ENCODE measurements at regions of chr9 and their contacts with region 1.

Region 1: DNA sequence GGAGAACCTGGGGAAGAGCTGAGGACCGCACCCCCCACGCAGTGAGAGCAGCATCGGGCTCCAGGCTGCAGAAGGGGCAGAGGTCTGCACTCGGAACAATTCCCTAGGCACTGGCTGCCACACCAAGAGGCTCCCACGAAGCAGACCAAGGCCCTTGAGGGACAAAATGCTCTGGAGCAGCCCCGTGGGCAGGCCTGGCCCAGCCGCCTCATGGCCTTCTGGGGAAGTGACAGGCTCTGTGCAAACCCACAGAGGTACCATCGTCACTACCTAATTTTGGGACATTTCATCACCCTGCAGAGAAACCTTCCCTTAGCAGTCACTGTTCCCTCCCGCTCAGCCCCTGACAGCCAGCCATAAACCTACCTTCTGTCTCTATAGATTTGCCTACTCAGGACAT is 15.9 kb downstream of the FBXW5 start:
- DNase-seq: peak; percentile 68 to 92
- ATAC-seq: peak; percentile 91 to 94 (median 92)
- H3K4me3 ChIP-seq: peak overlapping the region; percentile 55
- H3K27ac ChIP-seq: peak overlapping the region; percentile 98
- H3K4me1 ChIP-seq: peaks cover 63% of the 10 kb centered on the region
- H3K27me3 ChIP-seq: no peaks in the 10 kb centered on the region
- CTCF ChIP-seq: peak; percentile 52

Region 2: DNA sequence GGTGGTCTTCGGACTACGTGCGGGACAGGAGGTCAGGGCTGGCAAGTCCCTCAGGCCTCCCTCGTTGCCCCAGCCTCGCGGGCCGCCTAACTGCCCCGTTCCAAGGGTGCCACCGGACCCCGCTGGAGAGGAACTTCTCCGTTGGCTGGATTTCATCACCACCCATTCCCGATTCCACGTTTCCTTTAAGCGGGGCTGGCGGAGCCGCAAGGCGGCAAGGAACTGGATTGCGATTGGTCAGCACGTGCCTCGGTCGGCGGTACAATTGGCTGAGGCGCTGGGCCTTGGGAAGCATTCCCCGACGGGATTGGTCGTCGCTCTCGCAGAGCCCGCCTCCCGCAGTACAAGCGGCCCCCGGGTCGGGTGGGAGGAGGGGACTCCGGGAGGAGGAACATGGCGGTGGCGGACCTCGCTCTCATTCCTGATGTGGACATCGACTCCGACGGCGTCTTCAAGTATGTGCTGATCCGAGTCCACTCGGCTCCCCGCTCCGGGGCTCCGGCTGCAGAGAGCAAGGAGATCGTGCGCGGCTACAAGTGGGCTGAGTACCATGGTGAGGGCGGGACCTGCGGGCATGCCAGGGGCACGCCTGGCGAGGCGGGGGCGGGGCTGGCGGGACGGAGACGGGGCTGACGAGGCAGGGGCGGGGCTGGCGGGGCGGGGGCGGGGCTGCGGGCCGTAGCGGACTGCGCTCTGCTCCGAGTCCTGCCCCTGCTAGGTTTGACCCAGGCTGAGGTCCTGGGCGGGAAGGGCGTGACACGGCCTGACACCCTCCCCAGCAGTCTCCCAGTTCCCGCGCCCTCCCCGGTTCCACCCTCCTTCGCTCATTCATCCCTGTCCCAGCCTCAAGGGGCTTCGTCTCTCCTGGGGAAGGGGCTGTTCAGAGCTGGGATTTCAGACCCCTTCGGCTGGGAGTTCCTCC is 79.3 kb before region 1 on chr9 and contains the start of gene PHPT1:
- intact Hi-C with region 1: loop called (anchors 5 kb)
- DNase-seq: peak; percentile 99
- ATAC-seq: peak; percentile 85 to 91 (median 88)
- H3K4me3 ChIP-seq: peak within 1 kb of the TSS; percentile 81
- H3K27ac ChIP-seq: peak within 1 kb of the TSS; percentile 91
- H3K4me1 ChIP-seq: peaks cover 26% of the 10 kb centered on the region
- H3K27me3 ChIP-seq: peaks cover 0 to 20% (median 8%) of the 10 kb centered on the region in 3 donors
- CTCF ChIP-seq: no peak
- total RNA-seq, gene PHPT1: 154 to 272 (median 220) TPM

Region 3: DNA sequence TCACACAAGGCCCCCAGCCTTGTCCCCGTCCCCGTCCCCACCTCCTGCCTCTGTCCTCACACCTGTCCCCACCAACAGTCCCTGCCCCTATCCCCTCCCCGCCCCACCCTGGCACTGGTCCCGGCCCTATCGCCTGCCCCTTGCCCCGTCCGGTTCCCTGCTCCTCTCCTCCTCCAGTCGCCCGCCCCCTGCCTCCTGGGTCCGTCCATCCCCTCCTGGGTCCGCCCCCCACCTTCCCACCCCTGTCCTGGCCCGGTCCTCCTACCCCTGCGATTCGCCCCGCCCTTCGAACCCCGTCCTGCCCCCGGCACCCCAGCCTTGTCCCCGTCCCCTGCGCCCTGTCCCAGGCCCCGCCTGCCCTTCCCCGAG is 62.9 kb before region 1 on chr9:
- intact Hi-C with region 1: loop called in 1 of 2 experiments (anchors 5 kb)
- DNase-seq: peak; percentile 44 to 71
- ATAC-seq: peak in 2 of 4 donors; percentile 37 to 46
- H3K4me3 ChIP-seq: peak overlapping the region; percentile 89
- H3K27ac ChIP-seq: peak overlapping the region; percentile 96
- H3K4me1 ChIP-seq: peaks cover 21% of the 10 kb centered on the region
- H3K27me3 ChIP-seq: no peaks in the 10 kb centered on the region
- CTCF ChIP-seq: no peak

Region 4: DNA sequence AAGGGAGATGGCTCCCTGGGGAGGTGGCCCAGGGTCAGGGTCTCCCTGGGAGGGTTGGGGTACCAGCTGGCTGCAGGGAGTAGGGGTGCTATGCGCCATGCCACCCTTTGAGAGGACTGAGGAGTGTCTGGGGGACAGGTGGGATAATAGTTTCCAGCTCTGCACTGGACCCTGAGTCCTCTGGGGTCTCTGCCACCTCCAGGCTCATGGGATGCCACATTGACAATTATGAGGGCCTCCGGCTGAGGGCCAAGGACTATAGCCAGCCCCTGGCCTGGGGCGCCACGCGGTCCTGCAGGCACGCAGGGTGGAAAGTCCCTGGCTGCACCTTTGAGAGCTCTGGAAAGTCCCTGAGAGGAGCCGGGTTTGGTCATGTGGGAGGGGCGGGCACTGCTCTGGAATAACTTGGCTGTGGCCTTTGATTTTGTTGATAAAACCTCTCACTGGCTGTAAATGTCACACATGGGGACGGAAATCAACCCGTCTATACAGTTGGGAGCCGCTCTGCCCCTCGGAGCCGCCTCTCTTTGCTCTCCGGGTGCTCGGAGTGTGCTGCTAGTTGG is 26.3 kb before region 1 on chr9:
- intact Hi-C with region 1: loop called in 1 of 2 experiments (anchors 2 kb)
- DNase-seq: peak; percentile 59 to 79
- ATAC-seq: peak; percentile 82 to 97 (median 91)
- H3K4me3 ChIP-seq: peak overlapping the region; percentile 42
- H3K27ac ChIP-seq: peak overlapping the region; percentile 92
- H3K4me1 ChIP-seq: peaks cover 25% of the 10 kb centered on the region
- H3K27me3 ChIP-seq: no peaks in the 10 kb centered on the region
- CTCF ChIP-seq: no peak

Region 5: GRCh38 chr9:137114610-137115391 is 186.2 kb after region 1 on chr9 and contains the start of gene DPP7:
- intact Hi-C with region 1: no loop called
- DNase-seq: peak; percentile 77 to 87
- ATAC-seq: peak; percentile 83 to 95 (median 92)
- H3K4me3 ChIP-seq: peak within 1 kb of the TSS; percentile 81
- H3K27ac ChIP-seq: peak within 1 kb of the TSS; percentile 49
- H3K4me1 ChIP-seq: peaks cover 5% of the 10 kb centered on the region
- H3K27me3 ChIP-seq: no peaks in the 10 kb centered on the region
- CTCF ChIP-seq: no peak
- total RNA-seq, gene DPP7: 43.2 to 75.3 (median 67.5) TPM

Measured in psoas muscle (tissue), 8 donors.